ENCODE measurements at regions of chr7 and their contacts with region 1.

Region 1: DNA sequence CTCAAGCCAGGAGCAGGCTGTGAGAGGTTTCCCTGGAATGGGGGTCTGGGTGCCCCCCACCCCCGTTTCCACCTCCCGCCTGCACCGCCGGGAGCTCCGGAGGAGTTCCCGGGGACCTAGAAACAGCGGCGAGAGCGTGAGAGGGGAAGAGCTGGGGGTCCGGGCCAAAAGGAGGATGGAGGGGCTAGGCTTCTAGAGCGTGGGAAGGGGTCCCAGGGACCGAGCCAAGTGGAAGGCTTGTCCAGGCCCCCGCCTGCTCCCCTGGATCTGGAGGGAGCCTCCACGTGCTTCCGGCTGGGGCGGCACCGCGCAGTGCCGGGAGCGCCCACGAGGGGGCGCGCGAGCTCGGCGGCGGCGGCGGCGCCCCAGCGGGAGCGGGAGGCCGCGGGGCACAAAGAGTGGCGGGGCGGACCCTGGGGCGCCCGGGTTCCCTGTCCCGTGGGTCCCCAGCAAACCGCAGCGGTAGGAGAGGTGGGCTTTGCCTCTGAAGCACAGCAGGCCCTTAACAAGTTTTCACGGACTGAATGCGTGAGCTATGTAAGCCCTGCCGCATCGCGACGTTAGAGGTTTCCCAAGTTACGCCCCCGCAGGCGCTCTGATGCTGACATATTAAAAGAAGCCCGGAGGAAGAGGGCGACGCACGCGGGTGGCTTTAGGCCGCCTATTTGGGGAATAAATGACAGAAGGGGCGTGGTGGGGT is 104.4 kb upstream of the LRRC4 start:
- DNase-seq: peak; percentile 60
- ATAC-seq: peak; percentile 98
- H3K4me3 Mint-ChIP-seq: peak overlapping the region; percentile 69
- H3K27ac Mint-ChIP-seq: no peak overlapping the region
- H3K4me1 Mint-ChIP-seq: peaks cover 14% of the 10 kb centered on the region
- H3K27me3 Mint-ChIP-seq: peaks cover 51% of the 10 kb centered on the region

Region 2: GRCh38 chr7:128076796-128077271 is 58.8 kb before region 1 on chr7:
- CTCF ChIA-PET with region 1: no interaction called
- POLR2A ChIA-PET with region 1: no interaction called
- DNase-seq: no peak
- ATAC-seq: no peak
- H3K4me3 Mint-ChIP-seq: no peak overlapping the region
- H3K27ac Mint-ChIP-seq: peak overlapping the region; percentile 39
- H3K4me1 Mint-ChIP-seq: peaks cover 10% of the 10 kb centered on the region
- H3K27me3 Mint-ChIP-seq: no peaks in the 10 kb centered on the region

Region 3: GRCh38 chr7:128099204-128099671 is 36.4 kb before region 1 on chr7:
- CTCF ChIA-PET with region 1: interaction called, 11 read pairs
- POLR2A ChIA-PET with region 1: no interaction called
- DNase-seq: no peak
- ATAC-seq: no peak
- H3K4me3 Mint-ChIP-seq: no peak overlapping the region
- H3K27ac Mint-ChIP-seq: no peak overlapping the region
- H3K4me1 Mint-ChIP-seq: peaks cover 28% of the 10 kb centered on the region
- H3K27me3 Mint-ChIP-seq: no peaks in the 10 kb centered on the region

Region 4: DNA sequence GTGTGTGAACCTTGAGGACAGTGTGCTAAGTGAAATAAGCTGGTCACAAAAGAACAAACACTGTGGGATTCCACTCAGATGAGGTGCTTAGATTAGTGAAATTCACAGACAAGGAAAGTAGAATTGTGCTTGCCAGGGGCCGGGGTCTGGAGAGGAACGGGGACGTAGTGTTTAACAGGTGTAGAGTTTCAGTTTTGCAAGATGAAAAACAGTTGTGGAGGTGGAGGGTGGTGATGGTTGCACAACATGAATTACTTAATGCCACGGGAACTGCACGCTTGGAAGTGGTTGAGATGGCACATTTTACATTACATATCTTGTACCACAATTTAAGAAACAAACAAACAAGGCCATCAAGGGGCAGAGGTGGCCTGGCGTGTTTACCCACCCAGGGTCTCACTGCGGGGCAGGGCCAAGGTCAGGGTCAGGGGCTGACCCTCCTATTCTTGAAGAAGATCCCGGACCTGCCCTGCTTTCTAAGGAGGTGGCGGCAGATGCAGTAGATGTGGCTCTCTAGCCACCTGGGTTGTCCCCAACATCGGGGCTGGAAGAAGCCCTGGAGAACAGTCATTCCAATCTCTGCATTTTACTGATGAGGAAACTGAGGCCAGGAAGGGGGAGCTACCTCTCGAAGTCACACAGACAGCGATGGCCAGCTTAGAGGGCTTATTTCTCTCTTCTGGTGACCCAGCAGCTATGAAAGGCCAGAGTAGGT is 12.9 kb before region 1 on chr7:
- CTCF ChIA-PET with region 1: interaction called, 18 read pairs
- POLR2A ChIA-PET with region 1: no interaction called
- DNase-seq: no peak
- ATAC-seq: no peak
- H3K4me3 Mint-ChIP-seq: no peak overlapping the region
- H3K27ac Mint-ChIP-seq: no peak overlapping the region
- H3K4me1 Mint-ChIP-seq: peaks cover 14% of the 10 kb centered on the region
- H3K27me3 Mint-ChIP-seq: peaks cover 12% of the 10 kb centered on the region

Region 5: DNA sequence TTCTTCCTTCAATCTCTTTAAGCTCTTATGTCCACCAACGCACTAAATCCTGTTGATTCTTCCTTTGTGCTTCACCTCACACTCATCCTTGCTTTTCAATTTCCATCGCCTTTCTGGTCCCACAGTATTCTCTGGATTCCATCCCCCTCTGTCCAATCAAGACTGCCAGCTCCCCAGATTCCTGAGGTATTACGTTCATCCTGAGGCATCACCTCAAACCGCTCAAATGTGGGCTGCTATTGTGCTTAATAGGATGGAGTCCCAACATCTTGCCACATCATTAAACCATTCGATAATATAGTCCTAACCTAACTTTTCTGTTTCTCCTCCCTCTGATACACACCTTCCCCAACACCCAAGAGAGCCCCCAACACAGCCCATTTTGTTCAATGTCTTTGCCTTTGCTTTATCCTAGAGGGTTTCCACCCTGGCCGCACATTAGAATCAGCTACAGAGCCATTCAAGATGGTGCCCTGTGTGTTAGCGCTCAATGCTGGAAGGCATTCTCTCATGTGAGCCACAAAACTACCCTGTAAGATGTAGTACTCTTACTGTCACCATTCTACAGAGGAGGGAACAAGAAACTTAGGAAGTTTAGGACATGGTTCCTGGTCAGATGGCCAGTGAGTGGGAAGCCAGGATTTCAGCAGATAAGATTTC is 25.9 kb after region 1 on chr7:
- CTCF ChIA-PET with region 1: interaction called, 13 read pairs
- POLR2A ChIA-PET with region 1: no interaction called
- DNase-seq: no peak
- ATAC-seq: no peak
- H3K4me3 Mint-ChIP-seq: no peak overlapping the region
- H3K27ac Mint-ChIP-seq: no peak overlapping the region
- H3K4me1 Mint-ChIP-seq: peaks cover 1% of the 10 kb centered on the region
- H3K27me3 Mint-ChIP-seq: peaks cover 51% of the 10 kb centered on the region

Region 6: DNA sequence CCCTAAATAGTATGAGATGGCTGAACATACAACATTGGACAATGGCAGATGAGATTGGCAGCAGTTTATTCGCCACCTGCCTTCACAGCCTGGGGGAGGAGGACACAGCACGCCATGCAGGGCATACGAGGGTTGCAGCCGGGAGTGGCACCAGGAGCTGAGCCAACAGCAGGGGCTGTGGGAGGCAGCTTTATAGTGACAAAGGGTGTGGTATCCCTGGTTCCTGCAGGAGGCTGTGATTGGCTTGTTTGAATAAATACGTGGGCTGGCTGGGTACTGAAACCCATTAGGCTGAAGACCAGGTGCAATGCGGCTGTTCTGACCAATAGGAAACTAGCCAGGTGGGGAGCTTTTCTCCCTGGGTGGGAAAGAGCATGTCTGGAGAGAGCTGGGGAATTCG is 36.5 kb after region 1 on chr7:
- CTCF ChIA-PET with region 1: no interaction called
- POLR2A ChIA-PET with region 1: no interaction called
- DNase-seq: no peak
- ATAC-seq: no peak
- H3K4me3 Mint-ChIP-seq: no peak overlapping the region
- H3K27ac Mint-ChIP-seq: no peak overlapping the region
- H3K4me1 Mint-ChIP-seq: peaks cover 20% of the 10 kb centered on the region
- H3K27me3 Mint-ChIP-seq: peaks cover 42% of the 10 kb centered on the region

Region 7: DNA sequence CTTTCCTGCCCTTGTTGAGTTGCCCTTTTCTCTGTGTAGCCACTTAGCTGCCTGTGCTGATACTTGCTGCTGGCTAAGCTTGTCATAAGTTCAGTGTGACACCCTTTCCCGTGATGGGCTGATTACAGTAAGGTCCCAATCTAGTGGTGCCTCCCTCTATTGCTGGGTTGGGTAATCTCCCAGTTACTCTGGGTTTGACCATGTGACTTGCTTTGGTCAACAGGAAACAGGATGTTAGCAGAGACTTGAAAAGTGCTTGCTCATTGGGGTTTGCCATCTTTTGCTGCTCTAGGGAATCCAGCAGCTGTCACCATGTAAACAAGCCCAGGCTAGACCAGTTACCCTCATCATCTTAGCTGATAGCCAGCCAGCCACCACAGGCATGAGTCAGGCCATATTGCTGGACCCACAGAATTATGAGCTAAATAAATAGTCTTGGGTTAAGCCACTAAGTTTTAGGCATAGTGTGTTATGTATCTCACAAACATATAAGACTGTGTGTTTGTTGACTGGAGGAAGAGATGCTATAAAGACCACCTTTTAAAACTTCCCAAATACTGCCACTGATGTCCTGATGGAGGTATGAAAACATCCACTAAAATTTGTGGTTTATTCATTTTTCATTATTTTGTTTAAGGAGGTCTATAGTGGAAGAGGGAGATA is 101.4 kb after region 1 on chr7:
- CTCF ChIA-PET with region 1: no interaction called
- POLR2A ChIA-PET with region 1: no interaction called
- DNase-seq: peak; percentile 70
- ATAC-seq: peak; percentile 89
- H3K4me3 Mint-ChIP-seq: no peak overlapping the region
- H3K27ac Mint-ChIP-seq: peak overlapping the region; percentile 62
- H3K4me1 Mint-ChIP-seq: peaks cover 12% of the 10 kb centered on the region
- H3K27me3 Mint-ChIP-seq: peaks cover 14% of the 10 kb centered on the region

Region 8: DNA sequence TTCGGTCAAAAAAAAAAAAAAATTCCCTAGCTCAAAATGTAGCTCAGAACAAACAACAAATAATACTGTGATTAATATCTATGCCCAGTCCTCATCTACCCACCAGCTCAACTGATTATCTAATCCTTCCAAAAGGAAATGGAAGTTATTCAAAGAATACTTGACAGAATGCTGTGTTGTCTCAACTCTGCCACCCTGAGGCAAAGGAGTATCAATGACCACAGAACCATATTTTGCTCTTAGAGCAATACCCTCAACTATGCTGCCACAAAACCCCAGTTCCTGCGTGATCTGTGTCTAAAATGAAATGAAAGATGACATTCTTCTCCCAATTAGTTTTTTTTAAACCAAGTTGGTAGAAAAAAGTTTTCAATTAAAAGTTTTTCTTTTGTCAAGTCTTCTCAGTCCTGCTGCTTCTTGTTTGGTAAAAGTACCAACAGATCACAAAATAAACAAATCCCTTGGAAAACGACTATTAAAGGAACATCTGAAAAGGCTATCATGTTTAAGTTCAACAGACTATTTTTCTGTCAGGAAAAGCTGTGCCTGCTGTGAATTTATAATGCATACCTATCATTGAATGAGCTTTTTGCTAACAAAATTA is 186.5 kb after region 1 on chr7:
- CTCF ChIA-PET with region 1: interaction called, 32 read pairs
- POLR2A ChIA-PET with region 1: no interaction called
- DNase-seq: peak; percentile 70
- ATAC-seq: peak; percentile 68
- H3K4me3 Mint-ChIP-seq: no peak overlapping the region
- H3K27ac Mint-ChIP-seq: peak overlapping the region; percentile 90
- H3K4me1 Mint-ChIP-seq: peaks cover 44% of the 10 kb centered on the region
- H3K27me3 Mint-ChIP-seq: no peaks in the 10 kb centered on the region

Region 9: DNA sequence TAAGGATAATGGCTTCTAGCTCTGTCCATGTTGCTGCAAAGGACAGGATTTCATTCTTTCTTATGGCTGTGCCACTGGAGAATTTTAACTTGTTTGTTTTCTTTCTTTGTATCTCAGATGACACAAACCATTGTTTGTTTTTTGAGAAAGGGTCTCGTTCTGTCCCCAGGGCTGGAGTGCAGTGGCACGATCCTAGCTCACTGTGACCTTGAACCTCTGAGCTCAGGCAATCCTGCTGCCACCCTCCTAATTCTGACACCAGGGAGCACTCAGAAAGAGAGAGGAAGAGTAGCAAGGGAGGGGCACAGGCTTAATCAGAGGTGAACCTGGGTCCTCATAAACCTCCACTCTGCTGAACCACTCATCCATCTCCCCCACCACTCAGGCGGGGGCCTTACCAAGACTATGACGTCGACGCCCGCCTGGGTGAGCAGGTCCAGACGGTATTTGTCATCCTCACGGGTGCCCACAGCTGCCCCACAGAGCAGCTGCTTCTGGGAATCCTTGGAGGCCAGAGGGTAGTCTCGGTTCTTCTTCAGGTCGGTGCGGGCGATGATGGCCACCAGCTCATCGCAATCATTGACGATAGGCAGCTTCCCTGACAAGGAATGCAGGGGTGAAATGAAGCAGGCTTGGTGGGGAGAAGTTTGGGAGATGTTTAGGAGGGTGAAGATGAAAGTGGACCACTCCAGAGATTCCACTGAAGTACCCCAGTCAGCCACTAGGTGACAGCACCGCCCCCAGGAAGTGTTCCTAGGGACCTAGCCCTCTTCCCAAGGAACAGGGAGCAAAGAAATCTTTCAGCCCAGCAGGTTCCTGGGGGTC is 262.6 kb after region 1 on chr7:
- CTCF ChIA-PET with region 1: no interaction called
- POLR2A ChIA-PET with region 1: no interaction called
- DNase-seq: peak; percentile 46
- ATAC-seq: peak; percentile 35
- H3K4me3 Mint-ChIP-seq: no peak overlapping the region
- H3K27ac Mint-ChIP-seq: peak overlapping the region; percentile 28
- H3K4me1 Mint-ChIP-seq: peaks cover 8% of the 10 kb centered on the region
- H3K27me3 Mint-ChIP-seq: no peaks in the 10 kb centered on the region

Measured in activated CD8-positive, alpha-beta T cell treated with anti-CD3 and anti-CD28 coated beads, Interleukin-2, amount 10 ng/mL, durations not matched to agents 7 days and 5 days (primary cell).